Caco-2 (cell line): ENCODE measurements at regions of chr11 and their contacts with region 1.

Region 1: DNA sequence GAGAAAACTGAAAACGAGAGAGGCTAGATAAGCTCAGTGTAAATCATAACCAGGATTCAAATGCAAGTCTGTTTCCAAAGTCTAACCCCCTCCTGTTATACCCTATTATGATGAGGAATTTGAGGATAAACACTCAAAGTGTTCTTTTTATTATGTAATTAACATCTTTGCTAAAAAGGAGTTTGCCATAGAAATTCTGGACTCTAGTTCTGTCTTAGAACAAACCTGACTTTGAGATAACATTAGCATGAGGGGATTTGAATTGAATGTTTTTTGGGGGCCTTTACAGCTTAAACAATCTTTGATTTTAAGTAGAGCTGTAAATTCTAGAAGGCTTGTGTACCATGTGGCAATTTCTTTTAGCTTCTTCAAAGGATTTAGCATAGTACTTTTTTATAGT is 9.5 kb downstream of the C11orf54 start:
- DNase-seq: no peak
- H3K4me3 ChIP-seq: no peak overlapping the region
- H3K4me3 Mint-ChIP-seq: no peak overlapping the region
- H3K27ac Mint-ChIP-seq: no peak overlapping the region
- H3K4me1 ChIP-seq: peaks cover 4% of the 10 kb centered on the region
- H3K4me1 Mint-ChIP-seq: peaks cover 12% of the 10 kb centered on the region
- H3K27me3 ChIP-seq: no peaks in the 10 kb centered on the region
- H3K27me3 Mint-ChIP-seq: no peaks in the 10 kb centered on the region
- CTCF ChIP-seq: no peak

Region 2: GRCh38 chr11:93736129-93736528 is 14.9 kb before region 1 on chr11:
- CTCF ChIA-PET with region 1: interaction called, 10 read pairs
- POLR2A ChIA-PET with region 1: interaction called, 7 read pairs
- intact Hi-C with region 1: no loop called
- DNase-seq: no peak
- H3K4me3 ChIP-seq: no peak overlapping the region
- H3K4me3 Mint-ChIP-seq: peak overlapping the region; percentile 89
- H3K27ac Mint-ChIP-seq: no peak overlapping the region
- H3K4me1 ChIP-seq: peaks cover 51% of the 10 kb centered on the region
- H3K4me1 Mint-ChIP-seq: peaks cover 56% of the 10 kb centered on the region
- H3K27me3 ChIP-seq: no peaks in the 10 kb centered on the region
- H3K27me3 Mint-ChIP-seq: no peaks in the 10 kb centered on the region
- CTCF ChIP-seq: no peak

Region 3: DNA sequence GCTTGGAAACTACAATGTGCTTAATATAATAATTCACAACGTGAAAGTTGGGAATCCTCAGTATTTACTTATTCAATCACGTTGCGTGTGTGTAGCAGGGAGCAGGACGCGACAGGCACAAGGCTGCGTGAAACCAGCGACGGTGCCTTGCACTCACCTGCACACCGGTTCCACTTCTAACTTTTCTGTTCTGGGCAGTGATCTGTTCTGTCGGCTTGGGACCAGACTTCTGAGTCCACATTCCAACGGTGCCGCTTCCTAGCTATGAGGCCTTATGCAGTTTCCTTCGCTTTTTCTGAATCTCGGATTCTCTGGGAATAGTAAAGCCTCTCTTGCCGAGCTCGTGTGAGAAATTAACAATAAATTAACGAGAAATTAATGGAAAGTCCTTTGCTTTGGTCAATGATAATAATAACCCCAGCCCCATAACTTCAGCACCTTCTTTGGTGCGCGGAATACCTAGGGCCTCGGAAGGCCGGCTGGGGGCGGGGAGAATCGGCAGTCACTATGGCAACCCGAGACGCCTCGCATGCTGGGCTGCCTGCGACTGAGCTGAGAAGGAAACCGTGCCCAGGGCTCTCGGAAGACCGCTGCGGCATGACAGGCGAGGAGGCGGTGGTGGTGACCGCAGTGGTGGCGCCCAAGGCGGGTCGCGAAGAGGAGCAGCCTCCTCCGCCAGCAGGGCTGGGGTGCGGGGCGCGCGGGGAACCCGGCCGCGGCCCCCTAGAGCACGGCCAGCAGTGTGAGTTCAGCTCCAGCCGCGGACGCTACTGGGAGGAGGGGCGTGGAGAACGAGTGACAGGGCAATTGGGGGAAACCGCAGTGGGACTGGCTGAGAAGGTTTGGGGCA is 761.2 kb after region 1 on chr11 and contains the start of gene C11orf97:
- CTCF ChIA-PET with region 1: no interaction called
- POLR2A ChIA-PET with region 1: no interaction called
- intact Hi-C with region 1: no loop called
- DNase-seq: peak; percentile 83 to 86
- H3K4me3 ChIP-seq: peak within 1 kb of the TSS; percentile 50
- H3K4me3 Mint-ChIP-seq: peak within 1 kb of the TSS; percentile 87
- H3K27ac Mint-ChIP-seq: peak within 1 kb of the TSS; percentile 27
- H3K4me1 ChIP-seq: no peaks in the 10 kb centered on the region
- H3K4me1 Mint-ChIP-seq: no peaks in the 10 kb centered on the region
- H3K27me3 ChIP-seq: no peaks in the 10 kb centered on the region
- H3K27me3 Mint-ChIP-seq: peaks cover 10% of the 10 kb centered on the region
- CTCF ChIP-seq: no peak
- total RNA-seq, gene C11orf97: not detected in 2 replicates